RWPE1 (cell line): ENCODE measurements at regions of chrX and their contacts with region 1.

Region 1: GRCh38 chrX:53969540-53969939 is 74.7 kb downstream of the PHF8 start:
- DNase-seq: no peak
- H3K27ac ChIP-seq: no peak overlapping the region
- CTCF ChIP-seq: no peak

Region 2: GRCh38 chrX:53571494-53571893 is 398.0 kb before region 1 on chrX:
- CTCF ChIA-PET with region 1: no interaction called
- POLR2A ChIA-PET with region 1: no interaction called
- DNase-seq: no peak
- H3K27ac ChIP-seq: no peak overlapping the region
- CTCF ChIP-seq: no peak

Region 3: GRCh38 chrX:53683556-53684414 is 285.8 kb before region 1 on chrX:
- CTCF ChIA-PET with region 1: interaction called, 10 read pairs
- POLR2A ChIA-PET with region 1: no interaction called
- DNase-seq: peak; percentile 79
- H3K27ac ChIP-seq: peak overlapping the region; percentile 90
- CTCF ChIP-seq: no peak

Region 4: GRCh38 chrX:53930515-53931380 is 38.8 kb before region 1 on chrX:
- CTCF ChIA-PET with region 1: no interaction called
- POLR2A ChIA-PET with region 1: no interaction called
- DNase-seq: no peak
- H3K27ac ChIP-seq: no peak overlapping the region
- CTCF ChIP-seq: no peak

Region 5: DNA sequence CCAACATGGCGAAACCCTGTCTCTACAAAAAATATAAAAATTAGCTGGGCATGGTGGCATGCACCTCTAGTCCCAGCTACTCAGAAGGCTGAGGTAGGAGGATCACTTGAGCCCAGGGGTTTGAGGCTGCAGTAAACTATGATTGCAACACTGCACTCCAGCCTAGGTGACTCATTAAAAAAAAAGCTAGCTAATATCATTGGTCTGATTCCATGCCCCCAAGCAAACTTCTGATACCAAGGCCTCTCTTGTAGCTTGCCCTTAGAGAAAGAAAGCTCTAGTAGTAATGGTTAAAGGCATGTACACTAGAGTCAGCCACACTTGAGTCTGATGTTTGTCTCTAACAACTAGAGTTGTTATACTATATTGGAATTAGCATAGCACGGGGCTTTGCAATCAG is 107.4 kb after region 1 on chrX:
- CTCF ChIA-PET with region 1: no interaction called
- POLR2A ChIA-PET with region 1: interaction called, 10 read pairs
- DNase-seq: peak; percentile 34
- H3K27ac ChIP-seq: no peak overlapping the region
- CTCF ChIP-seq: no peak